PC-9 (cell line): ENCODE measurements at regions of chr15 and their contacts with region 1.

Region 1: DNA sequence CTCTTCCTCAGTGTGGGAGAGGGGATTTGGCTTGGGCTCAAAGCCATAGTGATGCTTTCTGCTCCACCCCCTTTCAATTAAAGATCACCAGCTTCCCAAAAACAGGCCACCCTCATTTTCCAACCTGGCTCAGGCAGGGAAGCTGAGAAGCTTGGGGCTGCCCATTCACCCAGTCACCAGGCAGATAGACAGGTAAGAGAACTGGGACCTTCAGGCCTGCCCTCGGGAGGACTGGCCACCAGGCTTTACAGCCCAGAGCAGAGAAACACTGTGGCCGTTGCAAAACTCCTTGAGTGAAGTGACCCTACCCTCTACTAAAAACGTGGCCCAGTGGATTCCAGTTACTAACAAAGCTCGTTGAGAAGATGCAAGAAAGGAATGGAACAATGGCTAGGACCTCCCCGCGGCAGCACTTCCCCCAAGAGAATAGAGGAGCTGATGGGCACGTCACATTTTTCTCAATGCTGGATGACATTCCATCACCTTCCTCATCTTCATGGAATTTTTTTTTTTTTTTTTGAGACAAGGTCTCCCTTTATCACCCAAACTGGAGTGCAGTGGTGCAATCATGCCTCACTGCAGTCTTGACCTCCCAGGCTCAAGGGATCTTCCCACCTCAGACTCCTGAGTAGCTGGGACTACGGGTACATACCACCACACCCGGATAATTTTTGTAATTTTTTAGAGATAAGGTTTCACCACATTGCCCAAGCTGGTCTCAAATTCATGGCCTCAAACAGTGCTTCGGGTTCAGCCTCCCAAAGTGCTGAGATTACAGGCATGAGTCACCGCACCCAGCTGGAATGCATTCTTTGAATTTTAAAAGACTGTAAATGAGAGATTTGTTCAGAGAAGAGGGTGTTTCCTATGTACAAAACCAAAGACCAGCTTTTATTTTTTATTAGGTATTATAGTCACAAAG is 37.9 kb downstream of the LIPC start:
- DNase-seq: peak; percentile 86 to 97
- H3K4me3 ChIP-seq: peak overlapping the region; percentile 35; the same call in 1 of the 2 replicates
- H3K27ac ChIP-seq: peak overlapping the region; percentile 100
- H3K4me1 ChIP-seq: peaks cover 66% of the 10 kb centered on the region
- H3K27me3 ChIP-seq: no peaks in the 10 kb centered on the region
- CTCF ChIP-seq: no peak

Region 2: GRCh38 chr15:58260911-58261267 is 208.8 kb before region 1 on chr15:
- CTCF ChIA-PET with region 1: no interaction called
- POLR2A ChIA-PET with region 1: interaction called, 3 read pairs
- intact Hi-C with region 1: loop called (anchors 2 kb)
- DNase-seq: peak; percentile 48 to 83
- H3K4me3 ChIP-seq: 0 out of 2 replicates have a peak overlapping the region, but pooled peaks have one; percentile 27
- H3K27ac ChIP-seq: peak overlapping the region; percentile 98
- H3K4me1 ChIP-seq: peaks cover 46% of the 10 kb centered on the region
- H3K27me3 ChIP-seq: no peaks in the 10 kb centered on the region
- CTCF ChIP-seq: no peak

Region 3: DNA sequence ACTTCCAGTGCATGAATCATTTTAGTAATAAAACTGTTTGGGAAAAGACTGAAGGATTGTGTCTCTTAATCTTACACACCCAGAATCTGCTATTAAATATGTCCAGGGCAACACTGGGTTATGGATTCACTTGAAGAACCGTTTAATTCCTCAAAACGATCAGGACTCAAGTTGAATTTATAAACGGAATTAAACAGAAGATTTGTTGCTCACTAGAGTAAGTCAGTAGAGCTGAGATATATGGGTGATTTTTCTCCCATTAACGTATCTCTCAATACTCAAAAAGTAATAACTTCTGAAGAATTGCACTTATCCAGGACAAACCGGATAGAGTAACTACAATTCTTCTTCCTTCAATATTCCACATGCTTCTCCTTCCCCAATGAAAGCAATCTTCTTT is 79.0 kb before region 1 on chr15:
- CTCF ChIA-PET with region 1: no interaction called
- POLR2A ChIA-PET with region 1: interaction called, 14 read pairs
- intact Hi-C with region 1: loop called (anchors 1 kb)
- DNase-seq: no peak
- H3K4me3 ChIP-seq: no peak overlapping the region
- H3K27ac ChIP-seq: peak overlapping the region; percentile 97
- H3K4me1 ChIP-seq: peaks cover 73% of the 10 kb centered on the region
- H3K27me3 ChIP-seq: no peaks in the 10 kb centered on the region
- CTCF ChIP-seq: no peak

Region 4: GRCh38 chr15:58506064-58506490 is 36.4 kb after region 1 on chr15:
- CTCF ChIA-PET with region 1: interaction called, 3 read pairs
- POLR2A ChIA-PET with region 1: interaction called, 20 read pairs
- intact Hi-C with region 1: loop called (anchors 1 kb)
- DNase-seq: peak; percentile 43 to 75
- H3K4me3 ChIP-seq: no peak overlapping the region
- H3K27ac ChIP-seq: 0 out of 2 replicates have a peak overlapping the region, but pooled peaks have one; percentile 40
- H3K4me1 ChIP-seq: peaks cover 17% of the 10 kb centered on the region
- H3K27me3 ChIP-seq: no peaks in the 10 kb centered on the region
- CTCF ChIP-seq: no peak

Region 5: DNA sequence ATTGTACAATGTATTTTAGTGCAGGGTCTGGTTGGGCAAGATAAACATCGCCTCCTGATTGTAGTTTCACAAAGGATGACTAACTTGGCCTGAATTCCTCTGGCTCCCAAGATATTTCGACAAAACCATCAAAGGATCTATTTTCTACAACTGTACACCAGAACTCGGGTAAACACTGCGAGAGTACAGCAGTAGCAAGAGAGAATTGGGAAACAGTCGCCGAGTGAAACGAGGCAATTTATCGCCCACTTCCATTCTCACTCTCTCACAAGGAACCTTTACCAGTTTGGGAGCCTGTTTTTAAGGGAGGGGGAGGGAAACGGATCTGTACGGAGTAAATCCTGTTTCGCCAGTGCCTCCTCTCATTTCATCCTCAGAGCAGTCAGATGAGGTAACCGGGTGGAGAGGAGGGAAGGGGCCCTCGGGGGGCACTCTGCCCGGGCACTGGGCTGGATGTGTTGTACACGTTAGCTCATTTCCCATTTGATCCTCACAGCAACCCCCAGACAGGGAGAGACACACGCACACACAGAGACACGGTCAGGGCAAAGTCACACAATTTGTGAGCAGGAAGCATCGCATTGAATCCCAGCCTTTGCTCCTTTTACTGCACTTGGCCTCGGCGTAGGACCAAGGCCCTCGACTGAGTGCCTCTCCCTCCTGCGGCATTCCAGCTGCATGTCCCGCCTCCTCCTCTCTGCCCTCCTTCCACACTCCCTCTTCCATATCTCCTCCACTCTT is 82.2 kb after region 1 on chr15:
- CTCF ChIA-PET with region 1: no interaction called
- POLR2A ChIA-PET with region 1: interaction called, 37 read pairs
- intact Hi-C with region 1: loop called (anchors 1 kb)
- DNase-seq: peak; percentile 59 to 92
- H3K4me3 ChIP-seq: peak overlapping the region; percentile 44; the same call in 1 of the 2 replicates
- H3K27ac ChIP-seq: peak overlapping the region; percentile 97
- H3K4me1 ChIP-seq: peaks cover 55% of the 10 kb centered on the region
- H3K27me3 ChIP-seq: no peaks in the 10 kb centered on the region
- CTCF ChIP-seq: no peak

Region 6: GRCh38 chr15:58770857-58771620 is 301.3 kb after region 1 on chr15 and contains the start of gene MINDY2:
- CTCF ChIA-PET with region 1: no interaction called
- POLR2A ChIA-PET with region 1: interaction called, 20 read pairs
- intact Hi-C with region 1: loop called (anchors 10 kb)
- DNase-seq: peak; percentile 92 to 97
- H3K4me3 ChIP-seq: peak within 1 kb of the TSS; percentile 80
- H3K27ac ChIP-seq: peak within 1 kb of the TSS; percentile 87
- H3K4me1 ChIP-seq: peaks cover 37% of the 10 kb centered on the region
- H3K27me3 ChIP-seq: no peaks in the 10 kb centered on the region
- CTCF ChIP-seq: no peak; the same call in 1 of the 2 replicates
- total RNA-seq, gene MINDY2: 18.4 and 22.8 TPM in 2 replicates

Region 7: DNA sequence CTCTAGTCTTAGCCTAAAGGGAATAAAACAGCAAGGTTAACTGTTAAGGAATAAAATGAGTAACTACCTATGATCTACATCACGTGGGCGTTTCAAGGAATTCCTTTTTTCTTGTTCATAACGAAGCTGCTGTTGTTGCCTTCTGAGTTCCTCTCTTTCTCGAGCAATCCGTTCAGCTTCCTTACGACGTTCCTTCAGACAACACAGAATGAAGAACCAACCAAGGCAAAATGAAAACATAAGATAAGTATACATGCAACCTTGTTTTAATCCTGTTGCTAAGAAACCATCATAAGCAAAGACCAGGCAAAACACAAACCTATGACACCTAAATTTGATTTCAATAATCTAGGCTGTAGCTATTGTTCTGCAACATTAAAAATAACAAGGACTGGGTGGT is 419.7 kb after region 1 on chr15:
- CTCF ChIA-PET with region 1: no interaction called
- POLR2A ChIA-PET with region 1: no interaction called
- intact Hi-C with region 1: no loop called
- DNase-seq: no peak
- H3K4me3 ChIP-seq: no peak overlapping the region
- H3K27ac ChIP-seq: no peak overlapping the region
- H3K4me1 ChIP-seq: no peaks in the 10 kb centered on the region
- H3K27me3 ChIP-seq: no peaks in the 10 kb centered on the region
- CTCF ChIP-seq: no peak